B cell (primary cell): ENCODE measurements at regions of chr10 and their contacts with region 1.

Region 1: DNA sequence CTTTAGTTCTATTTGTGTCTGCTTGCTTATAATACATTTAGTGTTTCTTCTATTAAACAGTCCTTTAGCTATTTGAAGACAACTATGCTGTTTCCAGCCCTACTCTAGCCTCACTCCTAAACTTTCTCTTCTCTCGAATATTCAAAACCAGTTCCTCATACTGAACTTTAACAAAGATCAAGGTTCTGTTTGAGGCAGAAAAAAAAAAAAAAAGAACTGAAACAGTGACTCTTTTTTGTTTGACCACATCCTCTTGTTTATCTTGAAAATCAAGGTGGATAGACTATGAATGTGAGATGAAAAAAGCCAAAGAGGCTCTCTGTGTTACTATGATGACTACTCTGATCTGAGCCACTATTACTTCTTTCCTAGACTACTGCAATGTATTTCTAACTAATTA is 154.3 kb downstream of the ZNF365 start:
- DNase-seq: peak; percentile 77
- ATAC-seq: peak; percentile 64
- H3K4me3 ChIP-seq: peak overlapping the region in 1 of 5 experiments; percentile 38
- H3K4me3 Mint-ChIP-seq: peak overlapping the region; percentile 66
- H3K27ac ChIP-seq: peak overlapping the region; percentile 84 to 90
- H3K27ac Mint-ChIP-seq: peak overlapping the region; percentile 96
- H3K4me1 ChIP-seq: peaks cover 47 to 51% of the 10 kb centered on the region in 2 donors
- H3K4me1 Mint-ChIP-seq: peaks cover 62% of the 10 kb centered on the region
- H3K27me3 ChIP-seq: no peaks in the 10 kb centered on the region
- H3K27me3 Mint-ChIP-seq: no peaks in the 10 kb centered on the region
- CTCF ChIP-seq: no peak

Region 2: DNA sequence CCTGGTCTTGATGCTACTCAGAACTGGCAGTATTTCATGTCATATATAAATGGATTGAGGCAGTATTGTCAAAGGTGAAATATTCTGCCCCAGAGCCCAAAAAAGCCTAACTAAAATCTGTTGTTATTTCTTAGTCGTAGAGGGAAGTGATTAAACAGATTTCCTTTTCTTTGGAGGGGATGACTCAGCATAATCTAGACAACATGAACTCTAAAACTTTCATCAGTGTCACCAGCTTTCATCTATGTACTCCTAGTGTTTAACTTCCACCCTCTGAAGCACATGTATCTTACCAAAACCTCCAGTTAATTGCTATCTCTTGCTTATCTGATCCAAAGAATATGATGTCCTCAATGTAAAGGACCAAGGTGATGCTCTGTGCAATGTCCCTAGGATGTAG is 724.0 kb before region 1 on chr10:
- CTCF ChIA-PET with region 1: no interaction called
- POLR2A ChIA-PET with region 1: no interaction called
- intact Hi-C with region 1: no loop called
- DNase-seq: no peak
- ATAC-seq: no peak
- H3K4me3 ChIP-seq: no peak overlapping the region
- H3K4me3 Mint-ChIP-seq: no peak overlapping the region
- H3K27ac ChIP-seq: no peak overlapping the region
- H3K27ac Mint-ChIP-seq: no peak overlapping the region
- H3K4me1 ChIP-seq: no peaks in the 10 kb centered on the region
- H3K4me1 Mint-ChIP-seq: no peaks in the 10 kb centered on the region
- H3K27me3 ChIP-seq: no peaks in the 10 kb centered on the region
- H3K27me3 Mint-ChIP-seq: no peaks in the 10 kb centered on the region
- CTCF ChIP-seq: no peak

Region 3: GRCh38 chr10:62502995-62503613 is 25.3 kb before region 1 on chr10:
- CTCF ChIA-PET with region 1: interaction called, 4 read pairs
- POLR2A ChIA-PET with region 1: no interaction called
- intact Hi-C with region 1: loop called (anchors 2 kb)
- DNase-seq: no peak
- ATAC-seq: no peak
- H3K4me3 ChIP-seq: no peak overlapping the region
- H3K4me3 Mint-ChIP-seq: no peak overlapping the region
- H3K27ac ChIP-seq: no peak overlapping the region
- H3K27ac Mint-ChIP-seq: no peak overlapping the region
- H3K4me1 ChIP-seq: peaks cover 6 to 7% of the 10 kb centered on the region in 2 donors
- H3K4me1 Mint-ChIP-seq: peaks cover 19% of the 10 kb centered on the region
- H3K27me3 ChIP-seq: no peaks in the 10 kb centered on the region
- H3K27me3 Mint-ChIP-seq: no peaks in the 10 kb centered on the region
- CTCF ChIP-seq: no peak

Region 4: DNA sequence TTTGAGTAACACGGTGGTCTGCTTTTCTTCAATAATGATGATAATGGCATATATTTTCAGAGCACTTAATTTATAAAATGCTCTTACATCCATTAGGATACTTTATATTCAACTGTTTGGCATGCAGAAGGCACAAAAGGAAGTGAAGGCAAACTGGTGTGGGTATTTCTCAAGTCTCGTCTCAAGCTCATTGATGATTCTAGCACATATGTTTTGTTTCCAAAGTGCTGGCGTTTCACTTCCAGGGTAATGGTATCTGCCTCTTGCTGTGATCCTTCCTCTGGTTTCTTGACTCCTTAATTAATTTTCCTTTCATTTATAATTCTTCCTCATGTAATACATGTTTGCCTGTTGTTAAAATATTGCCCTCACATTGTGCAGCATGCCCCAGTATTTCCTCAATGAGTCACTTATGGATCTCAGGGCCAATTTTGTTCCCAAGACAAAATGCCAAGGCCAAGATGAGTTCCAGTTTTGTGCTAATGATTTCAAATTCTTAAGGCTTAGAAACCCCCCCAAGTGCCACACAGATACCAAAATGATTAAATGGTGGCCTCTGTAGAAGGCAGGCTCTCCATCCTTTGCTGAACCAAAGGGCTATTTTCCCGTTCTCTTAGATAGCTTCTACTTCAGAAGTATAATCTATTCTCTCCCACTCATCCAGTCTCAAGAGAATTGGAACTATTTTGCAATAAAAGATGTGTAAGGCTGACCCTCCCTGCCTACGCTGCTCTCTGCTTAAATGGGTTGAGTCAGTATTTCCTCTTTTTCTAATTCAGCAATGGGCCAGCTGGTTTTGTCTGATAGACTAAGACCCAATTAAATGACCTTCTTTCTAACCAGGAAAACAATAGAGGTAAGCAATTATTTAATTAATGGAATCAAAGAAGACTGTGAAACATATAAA is 17.0 kb after region 1 on chr10:
- CTCF ChIA-PET with region 1: interaction called, 7 read pairs
- POLR2A ChIA-PET with region 1: interaction called, 20 read pairs
- intact Hi-C with region 1: no loop called
- DNase-seq: no peak
- ATAC-seq: peak; percentile 21
- H3K4me3 ChIP-seq: no peak overlapping the region
- H3K4me3 Mint-ChIP-seq: peak overlapping the region; percentile 0
- H3K27ac ChIP-seq: no peak overlapping the region
- H3K27ac Mint-ChIP-seq: peak overlapping the region; percentile 46
- H3K4me1 ChIP-seq: peaks cover 39 to 43% of the 10 kb centered on the region in 2 donors
- H3K4me1 Mint-ChIP-seq: peaks cover 61% of the 10 kb centered on the region
- H3K27me3 ChIP-seq: no peaks in the 10 kb centered on the region
- H3K27me3 Mint-ChIP-seq: no peaks in the 10 kb centered on the region
- CTCF ChIP-seq: no peak

Region 5: DNA sequence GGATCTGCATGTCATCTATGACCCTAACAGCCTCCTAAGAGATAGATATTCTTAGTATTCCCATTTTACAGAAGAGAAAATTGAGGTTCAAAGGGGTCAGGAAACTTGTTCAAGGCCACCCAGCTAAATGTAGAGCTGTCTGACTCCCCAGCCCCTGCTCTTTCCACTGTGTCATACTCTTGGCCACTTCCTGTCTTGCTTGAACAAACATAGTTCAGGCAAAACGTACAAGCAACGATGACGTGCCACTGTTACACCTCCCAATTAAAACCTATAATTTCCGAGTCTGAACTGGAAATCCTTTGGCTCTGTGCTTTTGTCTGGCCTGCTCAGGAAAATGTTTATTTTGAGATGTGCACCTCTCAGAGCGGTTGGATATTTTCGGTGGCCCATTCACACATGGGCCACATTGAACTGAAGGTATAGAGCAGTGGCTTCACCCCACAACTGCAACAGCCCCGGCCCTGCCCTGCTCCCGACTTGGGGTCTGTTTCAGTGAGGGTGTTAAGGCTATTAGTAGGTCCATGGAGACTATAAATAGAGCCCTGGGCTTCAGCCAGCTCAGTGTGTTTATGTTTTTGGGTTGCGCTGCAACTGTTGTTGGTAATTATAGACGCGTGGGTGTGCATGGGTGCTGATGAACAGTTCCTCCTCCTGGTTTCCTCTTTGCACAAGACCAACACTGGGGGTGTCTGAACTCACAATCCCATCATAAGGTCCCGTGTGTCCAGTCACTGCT is 103.8 kb after region 1 on chr10:
- CTCF ChIA-PET with region 1: no interaction called
- POLR2A ChIA-PET with region 1: no interaction called
- intact Hi-C with region 1: loop called (anchors 5 kb)
- DNase-seq: peak; percentile 84
- ATAC-seq: peak; percentile 81
- H3K4me3 ChIP-seq: peak overlapping the region in 4 of 5 experiments; percentile 31 to 56 (median 40)
- H3K4me3 Mint-ChIP-seq: peak overlapping the region; percentile 90
- H3K27ac ChIP-seq: peak overlapping the region; percentile 94 to 95
- H3K27ac Mint-ChIP-seq: peak overlapping the region; percentile 99
- H3K4me1 ChIP-seq: peaks cover 54 to 59% of the 10 kb centered on the region in 2 donors
- H3K4me1 Mint-ChIP-seq: peaks cover 54% of the 10 kb centered on the region
- H3K27me3 ChIP-seq: no peaks in the 10 kb centered on the region
- H3K27me3 Mint-ChIP-seq: no peaks in the 10 kb centered on the region
- CTCF ChIP-seq: no peak

Region 6: DNA sequence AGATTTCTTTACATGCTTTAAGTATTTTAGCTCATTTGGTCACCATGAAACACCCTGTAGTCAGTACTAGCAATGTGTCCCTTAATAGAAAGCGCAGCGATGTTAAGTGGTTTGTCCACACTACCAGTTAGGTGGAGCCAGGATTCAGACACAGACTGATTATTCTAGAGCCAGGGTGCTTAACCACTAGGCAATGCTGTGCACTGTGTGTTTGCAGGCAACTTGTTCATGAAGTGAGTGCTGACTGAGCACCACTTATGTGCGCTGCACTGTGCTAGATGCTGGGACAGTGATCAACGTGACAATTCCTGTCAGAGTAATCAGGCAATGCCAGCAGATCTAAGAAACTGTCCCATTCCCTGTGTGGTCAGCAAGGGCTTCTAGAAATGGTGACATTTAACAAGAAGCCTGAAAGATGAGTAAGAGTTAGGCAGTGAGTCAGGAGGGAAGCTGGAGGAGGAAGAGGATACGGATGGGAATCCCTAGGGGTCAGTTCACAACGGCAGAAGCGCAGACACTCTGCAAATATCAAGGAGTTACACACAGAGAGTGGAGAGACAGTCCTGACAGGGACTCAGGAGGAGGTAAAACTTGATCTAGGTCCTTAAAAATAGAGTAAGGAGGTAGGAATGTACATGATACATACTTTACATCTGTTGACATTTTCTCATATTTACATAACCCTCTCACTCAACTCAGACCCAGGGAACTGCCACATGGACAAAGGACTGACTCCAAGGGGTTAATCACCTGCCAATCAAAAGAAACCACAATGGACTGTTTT is 357.4 kb after region 1 on chr10:
- CTCF ChIA-PET with region 1: no interaction called
- POLR2A ChIA-PET with region 1: no interaction called
- intact Hi-C with region 1: no loop called
- DNase-seq: no peak
- ATAC-seq: no peak
- H3K4me3 ChIP-seq: no peak overlapping the region
- H3K4me3 Mint-ChIP-seq: no peak overlapping the region
- H3K27ac ChIP-seq: no peak overlapping the region
- H3K27ac Mint-ChIP-seq: no peak overlapping the region
- H3K4me1 ChIP-seq: no peaks in the 10 kb centered on the region
- H3K4me1 Mint-ChIP-seq: no peaks in the 10 kb centered on the region
- H3K27me3 ChIP-seq: no peaks in the 10 kb centered on the region
- H3K27me3 Mint-ChIP-seq: peaks cover 33% of the 10 kb centered on the region
- CTCF ChIP-seq: no peak

Region 7: GRCh38 chr10:63256009-63256773 is 727.8 kb after region 1 on chr10:
- CTCF ChIA-PET with region 1: no interaction called
- POLR2A ChIA-PET with region 1: no interaction called
- intact Hi-C with region 1: loop called (anchors 10 kb)
- DNase-seq: peak; percentile 47
- ATAC-seq: peak; percentile 42
- H3K4me3 ChIP-seq: peak overlapping the region in 1 of 5 experiments; percentile 32
- H3K4me3 Mint-ChIP-seq: peak overlapping the region; percentile 83
- H3K27ac ChIP-seq: peak overlapping the region; percentile 34 to 73
- H3K27ac Mint-ChIP-seq: peak overlapping the region; percentile 88
- H3K4me1 ChIP-seq: peaks cover 81 to 92% of the 10 kb centered on the region in 2 donors
- H3K4me1 Mint-ChIP-seq: peaks cover 85% of the 10 kb centered on the region
- H3K27me3 ChIP-seq: no peaks in the 10 kb centered on the region
- H3K27me3 Mint-ChIP-seq: no peaks in the 10 kb centered on the region
- CTCF ChIP-seq: no peak